ENCODE measurements at regions of chr10 and their contacts with region 1.

Region 1: DNA sequence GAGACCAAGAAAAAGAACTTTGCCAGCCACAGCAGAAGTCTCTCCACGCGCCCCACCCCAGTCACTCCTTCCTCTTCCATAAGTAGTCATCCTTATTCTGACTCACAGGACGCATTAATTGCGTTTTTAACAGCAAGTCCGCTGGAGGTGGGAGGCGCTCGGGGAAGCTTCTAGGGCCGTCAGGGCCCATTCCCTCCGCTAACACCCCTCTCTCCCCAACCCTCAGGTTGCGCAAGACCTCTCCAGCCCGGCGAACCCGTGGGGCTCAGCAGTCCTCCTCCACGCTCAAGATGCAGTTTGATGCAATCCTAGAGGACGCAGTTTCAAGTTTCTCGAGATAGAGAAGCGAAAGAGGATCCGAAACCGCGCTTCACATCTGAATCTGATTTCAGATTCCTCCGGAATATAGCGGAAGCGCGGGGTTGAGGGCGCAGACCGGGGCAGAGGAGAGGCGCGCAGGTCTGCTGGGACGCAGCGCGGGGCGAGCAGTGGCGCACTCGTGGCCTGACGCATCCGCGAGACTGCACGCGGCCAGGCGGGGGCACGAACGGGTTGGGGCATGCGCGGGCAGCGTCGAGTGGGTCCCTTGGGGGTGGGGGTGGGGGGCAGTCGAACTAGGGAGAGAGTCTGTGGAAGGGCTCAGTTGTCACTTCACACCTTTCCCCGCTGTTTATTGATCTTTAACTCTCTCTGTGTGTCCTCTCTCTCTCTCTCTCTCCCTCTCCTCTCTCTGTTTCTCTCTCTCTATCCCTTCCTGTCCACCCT is 37.8 kb upstream of the PSAP start:
- DNase-seq: peak; percentile 69 to 81
- H3K4me3 ChIP-seq: peak overlapping the region; percentile 67
- H3K27ac ChIP-seq: peak overlapping the region; percentile 88
- H3K4me1 ChIP-seq: peaks cover 23% of the 10 kb centered on the region
- H3K27me3 ChIP-seq: no peaks in the 10 kb centered on the region
- CTCF ChIP-seq: no peak

Region 2: GRCh38 chr10:71396084-71396720 is 492.6 kb before region 1 on chr10:
- CTCF ChIA-PET with region 1: no interaction called
- POLR2A ChIA-PET with region 1: no interaction called
- intact Hi-C with region 1: loop called (anchors 5 kb)
- DNase-seq: peak; percentile 49 to 70
- H3K4me3 ChIP-seq: peak overlapping the region; percentile 60
- H3K27ac ChIP-seq: no peak overlapping the region
- H3K4me1 ChIP-seq: peaks cover 41% of the 10 kb centered on the region
- H3K27me3 ChIP-seq: peaks cover 8% of the 10 kb centered on the region; the same call in 1 of the 2 replicates
- CTCF ChIP-seq: peak; percentile 57

Region 3: DNA sequence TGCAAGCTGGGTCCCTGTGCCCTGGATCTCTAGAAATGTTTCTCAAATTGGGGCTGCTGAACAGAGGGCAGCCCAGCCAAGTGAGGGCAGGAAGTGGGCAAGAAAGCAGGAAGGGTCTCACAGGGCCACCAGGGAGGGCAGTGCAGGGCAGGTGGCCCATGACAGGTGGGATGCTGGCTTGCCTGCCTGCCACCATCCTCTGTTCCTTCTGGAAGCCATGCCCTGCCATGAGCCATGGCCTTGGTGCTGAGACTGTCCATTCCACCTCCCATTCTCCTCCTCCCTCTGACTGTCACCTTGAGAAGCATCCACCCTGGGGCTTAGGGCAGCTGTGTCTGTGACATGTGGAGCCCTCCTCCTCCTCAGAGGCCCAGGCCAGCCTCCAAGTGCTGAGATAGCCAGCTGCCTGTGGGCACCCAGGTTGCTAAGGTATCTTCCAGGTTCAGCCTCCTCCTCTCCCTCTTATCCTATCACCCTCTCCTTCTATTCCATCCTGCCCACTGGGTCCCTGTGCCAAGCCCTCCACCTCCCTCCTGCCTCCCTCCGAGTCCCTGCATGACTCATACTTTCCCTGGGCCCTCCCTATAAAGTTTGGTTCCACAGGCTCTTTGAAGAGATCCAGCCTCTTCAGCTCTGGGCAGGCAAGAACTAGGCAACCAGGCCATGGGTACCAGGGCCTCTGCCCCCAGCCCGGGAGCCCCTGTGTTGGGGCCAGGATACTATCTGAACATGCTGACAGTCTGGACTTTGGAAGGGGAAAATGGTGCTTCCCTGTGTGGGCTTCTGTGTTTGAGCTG is 116.8 kb before region 1 on chr10:
- CTCF ChIA-PET with region 1: no interaction called
- POLR2A ChIA-PET with region 1: no interaction called
- intact Hi-C with region 1: loop called (anchors 2 kb)
- DNase-seq: peak; percentile 76 to 79
- H3K4me3 ChIP-seq: peak overlapping the region; percentile 81
- H3K27ac ChIP-seq: 0 out of 2 replicates have a peak overlapping the region, but pooled peaks have one; percentile 53
- H3K4me1 ChIP-seq: peaks cover 74% of the 10 kb centered on the region
- H3K27me3 ChIP-seq: no peaks in the 10 kb centered on the region
- CTCF ChIP-seq: no peak

Region 4: DNA sequence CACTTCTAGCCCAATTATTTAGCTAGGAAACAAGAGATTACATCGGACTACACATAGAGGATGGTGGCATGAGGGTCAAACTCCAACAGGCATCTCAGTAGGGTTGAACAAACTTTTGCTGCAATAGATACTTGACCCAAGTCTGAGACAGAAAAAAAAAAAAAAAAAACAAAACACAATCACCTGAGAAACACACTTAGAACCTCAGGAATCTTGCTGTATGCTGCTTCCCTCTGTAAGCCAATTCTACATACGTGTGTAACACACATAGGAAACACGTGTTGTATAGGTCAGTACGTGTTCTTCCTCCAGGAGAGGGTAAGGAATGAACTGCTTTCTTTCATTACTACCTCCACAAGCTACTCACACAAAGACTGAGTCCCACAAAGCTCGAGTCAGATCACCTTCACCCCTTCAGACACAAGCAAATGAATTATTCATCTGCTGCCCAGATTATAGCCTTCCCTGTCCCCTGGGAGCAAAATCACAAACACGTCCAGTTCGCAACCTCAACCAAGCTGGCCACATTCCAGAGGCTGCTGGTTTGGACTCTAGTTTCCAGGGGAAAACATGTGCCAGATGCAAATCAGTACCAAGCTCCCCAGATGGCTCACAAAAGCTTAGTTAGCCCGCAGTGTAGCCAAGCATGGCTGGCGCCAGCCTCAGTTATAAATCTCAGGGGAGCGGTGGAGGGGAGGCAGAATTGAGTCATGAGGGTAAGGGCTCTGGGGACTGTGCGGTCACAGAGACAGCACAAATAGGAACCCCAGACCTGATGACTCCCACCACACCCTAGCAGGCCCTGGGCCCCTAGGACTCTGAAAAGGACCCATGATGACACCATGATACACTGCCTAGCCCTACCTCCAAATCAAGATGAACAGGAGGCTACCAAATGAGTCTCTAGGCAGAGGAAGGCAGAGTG is 52.9 kb before region 1 on chr10:
- CTCF ChIA-PET with region 1: no interaction called
- POLR2A ChIA-PET with region 1: no interaction called
- intact Hi-C with region 1: loop called (anchors 1 kb)
- DNase-seq: peak in 1 of 2 experiments; percentile 28
- H3K4me3 ChIP-seq: no peak overlapping the region
- H3K27ac ChIP-seq: no peak overlapping the region
- H3K4me1 ChIP-seq: peaks cover 52% of the 10 kb centered on the region
- H3K27me3 ChIP-seq: no peaks in the 10 kb centered on the region
- CTCF ChIP-seq: no peak

Region 5: DNA sequence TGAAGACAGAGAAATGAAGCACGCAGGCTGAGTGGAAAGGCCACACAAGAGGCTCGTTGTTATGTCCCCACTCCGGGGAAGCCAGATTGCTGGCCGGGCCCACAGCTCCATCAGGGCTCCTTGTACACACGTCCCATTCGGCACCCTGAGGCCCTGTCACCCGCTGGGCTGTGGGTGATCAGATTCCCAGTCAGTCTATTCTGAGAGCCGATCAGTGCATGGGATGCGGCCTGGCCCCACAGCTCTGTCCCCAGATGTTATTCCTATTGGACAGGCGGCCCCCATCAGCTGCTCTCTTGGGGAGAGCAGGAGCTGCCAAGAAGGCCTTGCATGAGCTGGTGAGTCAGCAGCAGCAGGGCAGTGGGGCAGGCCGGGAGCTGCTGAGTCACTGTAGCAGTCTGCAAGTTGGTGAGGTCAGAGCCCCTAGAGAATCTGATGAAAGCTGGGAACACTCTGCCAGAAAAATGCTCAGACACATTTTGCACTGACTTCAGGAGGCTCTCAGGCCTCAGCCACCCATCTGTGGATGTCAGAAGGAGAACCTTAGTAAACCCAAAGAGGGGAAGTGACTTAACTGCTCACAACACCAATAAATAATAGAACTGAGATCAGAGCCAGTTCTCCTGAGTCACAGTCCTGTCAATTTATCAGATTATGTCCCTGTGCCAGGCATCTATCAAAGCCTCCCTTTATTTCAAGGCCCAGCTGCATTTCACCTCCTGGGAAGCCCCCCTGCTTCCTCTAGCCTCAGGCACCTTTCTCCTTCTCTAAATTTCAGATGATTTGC is 28.4 kb before region 1 on chr10:
- CTCF ChIA-PET with region 1: no interaction called
- POLR2A ChIA-PET with region 1: no interaction called
- intact Hi-C with region 1: loop called (anchors 1 kb)
- DNase-seq: peak; percentile 92 to 96
- H3K4me3 ChIP-seq: no peak overlapping the region
- H3K27ac ChIP-seq: peak overlapping the region; percentile 99
- H3K4me1 ChIP-seq: peaks cover 60% of the 10 kb centered on the region
- H3K27me3 ChIP-seq: no peaks in the 10 kb centered on the region
- CTCF ChIP-seq: no peak

Region 6: DNA sequence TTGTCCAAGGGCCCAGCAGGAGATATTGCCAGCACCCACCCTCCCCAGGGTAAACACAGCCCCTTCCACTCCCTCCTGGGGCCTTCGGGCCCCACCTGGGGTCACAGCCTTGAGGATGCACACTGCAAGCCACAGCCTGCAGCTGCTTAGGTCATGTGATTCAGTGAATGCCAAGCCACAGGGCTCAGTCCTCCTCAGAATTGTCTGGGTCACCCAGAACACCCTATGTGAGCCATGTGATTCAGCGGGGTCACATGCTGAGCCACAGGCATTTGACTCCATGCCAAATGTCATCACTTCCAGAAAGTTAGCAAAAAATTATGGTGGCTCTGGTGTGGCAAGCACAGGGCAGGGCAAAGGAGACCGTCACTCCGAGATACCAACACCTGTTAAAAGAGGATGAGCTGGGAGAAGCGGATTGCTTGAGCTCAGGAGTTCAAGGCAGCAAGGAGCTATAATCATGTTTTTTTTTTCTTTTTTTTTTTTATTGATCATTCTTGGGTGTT is 20.6 kb before region 1 on chr10:
- CTCF ChIA-PET with region 1: no interaction called
- POLR2A ChIA-PET with region 1: interaction called, 4 read pairs
- intact Hi-C with region 1: loop called (anchors 2 kb)
- DNase-seq: peak; percentile 92 to 95
- H3K4me3 ChIP-seq: no peak overlapping the region
- H3K27ac ChIP-seq: peak overlapping the region; percentile 70
- H3K4me1 ChIP-seq: peaks cover 59% of the 10 kb centered on the region
- H3K27me3 ChIP-seq: no peaks in the 10 kb centered on the region
- CTCF ChIP-seq: no peak

Region 7: GRCh38 chr10:72016608-72017312 is 128.0 kb after region 1 on chr10:
- CTCF ChIA-PET with region 1: interaction called, 15 read pairs
- POLR2A ChIA-PET with region 1: no interaction called
- intact Hi-C with region 1: no loop called
- DNase-seq: no peak
- H3K4me3 ChIP-seq: no peak overlapping the region
- H3K27ac ChIP-seq: no peak overlapping the region
- H3K4me1 ChIP-seq: 0 out of 2 replicates have a peak, but pooled peaks cover 6% of the 10 kb centered on the region
- H3K27me3 ChIP-seq: no peaks in the 10 kb centered on the region
- CTCF ChIP-seq: no peak

Measured in PC-9 (cell line).